ENCODE measurements at regions of chr1 and their contacts with region 1.

Region 1: GRCh38 chr1:194295685-194296084 is 1109.3 kb upstream of the B3GALT2 start:
- DNase-seq: no peak
- H3K4me3 Mint-ChIP-seq: no peak overlapping the region
- H3K27ac Mint-ChIP-seq: no peak overlapping the region
- H3K4me1 Mint-ChIP-seq: peaks cover 49% of the 10 kb centered on the region
- H3K27me3 Mint-ChIP-seq: no peaks in the 10 kb centered on the region

Region 2: DNA sequence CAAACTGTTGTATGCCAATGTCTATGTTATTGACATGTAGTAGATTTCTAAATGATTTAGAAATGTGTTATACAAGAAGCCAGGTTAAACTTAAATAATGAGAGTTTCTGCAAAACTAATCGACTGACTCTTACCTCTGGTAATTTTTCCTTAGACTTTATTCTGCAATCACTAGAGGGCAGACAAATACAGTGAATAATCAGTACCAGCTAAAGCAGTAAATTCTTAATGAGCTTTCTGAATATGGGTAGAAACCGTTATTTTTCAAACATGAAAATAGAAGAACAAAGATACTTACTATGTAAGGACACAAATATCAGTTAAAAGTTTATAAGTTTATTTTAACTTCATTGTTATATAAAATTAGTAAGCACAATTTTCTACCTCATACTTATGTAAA is 1818.1 kb before region 1 on chr1:
- CTCF ChIA-PET with region 1: no interaction called
- POLR2A ChIA-PET with region 1: no interaction called
- intact Hi-C with region 1: loop called (anchors 2 kb)
- DNase-seq: no peak
- H3K4me3 Mint-ChIP-seq: no peak overlapping the region
- H3K27ac Mint-ChIP-seq: no peak overlapping the region
- H3K4me1 Mint-ChIP-seq: no peaks in the 10 kb centered on the region
- H3K27me3 Mint-ChIP-seq: no peaks in the 10 kb centered on the region

Region 3: DNA sequence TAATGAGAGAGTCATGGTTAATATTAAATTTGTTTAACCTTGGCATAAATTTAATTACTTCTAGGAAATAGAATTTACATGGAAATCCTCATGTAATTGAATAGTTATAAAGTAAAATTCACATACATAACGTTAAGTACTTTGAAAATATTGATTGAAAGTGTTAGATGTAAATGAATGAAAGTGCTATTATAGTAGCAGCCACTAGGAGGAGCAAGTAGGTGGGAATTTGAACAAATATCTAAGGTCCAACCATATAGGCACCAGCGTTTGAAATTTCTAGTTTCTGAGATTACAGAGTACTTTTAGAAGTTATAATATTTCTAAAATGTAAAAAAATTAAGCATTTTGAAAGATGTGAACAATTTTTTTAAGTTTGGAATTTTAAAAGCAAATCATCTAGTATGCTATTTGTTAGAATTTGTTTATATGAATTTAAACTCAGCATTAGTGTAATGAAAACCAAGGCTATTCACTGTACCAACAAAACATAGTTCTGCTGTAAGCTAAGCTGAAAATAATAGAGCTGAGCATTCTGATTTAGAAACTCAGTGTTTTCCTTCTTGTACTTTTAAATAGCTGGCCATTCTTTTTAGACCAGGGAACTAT is 1112.6 kb before region 1 on chr1:
- CTCF ChIA-PET with region 1: interaction called, 7 read pairs
- POLR2A ChIA-PET with region 1: no interaction called
- intact Hi-C with region 1: loop called (anchors 1 kb)
- DNase-seq: no peak
- H3K4me3 Mint-ChIP-seq: no peak overlapping the region
- H3K27ac Mint-ChIP-seq: no peak overlapping the region
- H3K4me1 Mint-ChIP-seq: peaks cover 41% of the 10 kb centered on the region
- H3K27me3 Mint-ChIP-seq: no peaks in the 10 kb centered on the region

Region 4: DNA sequence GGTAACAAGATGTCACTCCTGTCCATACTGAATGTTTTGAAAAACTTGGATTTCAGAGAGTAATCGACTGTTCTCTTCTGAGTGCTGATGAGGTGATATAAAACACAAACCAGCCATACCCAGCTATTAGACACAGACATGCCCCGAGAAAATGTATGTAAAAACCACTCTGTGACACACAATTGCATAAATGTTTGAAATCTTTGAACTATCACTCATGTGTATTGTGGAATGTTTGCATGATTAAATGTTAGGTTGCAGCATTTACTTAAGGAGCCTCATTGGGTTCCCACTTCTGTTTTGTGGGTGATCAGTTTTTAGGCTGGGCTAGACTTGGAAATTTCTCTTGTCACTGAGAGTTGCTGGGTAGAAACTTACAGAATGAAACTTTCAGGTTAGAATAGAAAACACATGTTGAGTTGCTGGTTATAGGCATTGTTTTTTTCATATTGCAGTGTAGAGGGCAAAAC is 838.8 kb before region 1 on chr1:
- CTCF ChIA-PET with region 1: no interaction called
- POLR2A ChIA-PET with region 1: no interaction called
- intact Hi-C with region 1: loop called (anchors 5 kb)
- DNase-seq: no peak
- H3K4me3 Mint-ChIP-seq: no peak overlapping the region
- H3K27ac Mint-ChIP-seq: no peak overlapping the region
- H3K4me1 Mint-ChIP-seq: peaks cover 29% of the 10 kb centered on the region
- H3K27me3 Mint-ChIP-seq: no peaks in the 10 kb centered on the region

Region 5: GRCh38 chr1:193799948-193800690 is 495.6 kb before region 1 on chr1:
- CTCF ChIA-PET with region 1: no interaction called
- POLR2A ChIA-PET with region 1: no interaction called
- intact Hi-C with region 1: loop called (anchors 10 kb)
- DNase-seq: no peak
- H3K4me3 Mint-ChIP-seq: no peak overlapping the region
- H3K27ac Mint-ChIP-seq: no peak overlapping the region
- H3K4me1 Mint-ChIP-seq: peaks cover 13% of the 10 kb centered on the region
- H3K27me3 Mint-ChIP-seq: no peaks in the 10 kb centered on the region

Region 6: GRCh38 chr1:194102606-194103005 is 193.1 kb before region 1 on chr1:
- CTCF ChIA-PET with region 1: no interaction called
- POLR2A ChIA-PET with region 1: no interaction called
- intact Hi-C with region 1: loop called (anchors 1 kb)
- DNase-seq: no peak
- H3K4me3 Mint-ChIP-seq: no peak overlapping the region
- H3K27ac Mint-ChIP-seq: no peak overlapping the region
- H3K4me1 Mint-ChIP-seq: no peaks in the 10 kb centered on the region
- H3K27me3 Mint-ChIP-seq: no peaks in the 10 kb centered on the region

Region 7: GRCh38 chr1:194225821-194226220 is 69.9 kb before region 1 on chr1:
- CTCF ChIA-PET with region 1: no interaction called
- POLR2A ChIA-PET with region 1: no interaction called
- intact Hi-C with region 1: loop called (anchors 5 kb)
- DNase-seq: no peak
- H3K4me3 Mint-ChIP-seq: no peak overlapping the region
- H3K27ac Mint-ChIP-seq: peak overlapping the region; percentile 23
- H3K4me1 Mint-ChIP-seq: peaks cover 20% of the 10 kb centered on the region
- H3K27me3 Mint-ChIP-seq: no peaks in the 10 kb centered on the region

Measured in activated CD4-positive, alpha-beta memory T cell treated with anti-CD3 and anti-CD28 coated beads for 36 hours (primary cell).